ENCODE measurements at regions of chrX and their contacts with region 1.

Region 1: DNA sequence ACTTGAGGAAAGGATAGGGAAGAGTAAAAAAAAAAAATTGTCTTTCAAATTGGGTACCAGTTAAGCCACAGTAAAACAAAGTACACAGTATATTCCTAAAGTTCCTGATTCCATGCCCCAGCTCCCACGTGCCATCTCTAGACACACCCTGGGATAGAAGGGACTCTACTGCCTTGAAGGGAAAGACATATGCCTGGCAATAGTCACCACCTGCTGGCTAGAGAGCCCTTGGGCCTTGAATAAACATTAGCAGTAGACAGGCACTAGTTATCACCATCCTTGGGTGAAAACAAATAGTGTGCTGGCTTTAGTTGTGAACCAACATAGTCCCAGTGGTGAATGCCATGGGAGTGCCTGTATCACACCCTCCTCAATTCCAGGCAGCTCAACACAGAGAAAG is 44.9 kb downstream of the KLHL4 start:
- DNase-seq: no peak
- H3K4me3 ChIP-seq: no peak overlapping the region
- H3K27ac ChIP-seq: no peak overlapping the region
- H3K4me1 ChIP-seq: no peaks in the 10 kb centered on the region
- H3K27me3 ChIP-seq: no peaks in the 10 kb centered on the region
- CTCF ChIP-seq: no peak

Region 2: GRCh38 chrX:87517571-87518141 is 44.9 kb before region 1 on chrX and contains the start of gene KLHL4:
- CTCF ChIA-PET with region 1: no interaction called
- POLR2A ChIA-PET with region 1: no interaction called
- intact Hi-C with region 1: loop called (anchors 10 kb)
- DNase-seq: peak in 1 of 2 experiments; percentile 33
- H3K4me3 ChIP-seq: no peak within 1 kb of the TSS; the same call in 1 of the 2 replicates
- H3K27ac ChIP-seq: no peak within 1 kb of the TSS
- H3K4me1 ChIP-seq: peaks cover 4% of the 10 kb centered on the region; the same call in 1 of the 2 replicates
- H3K27me3 ChIP-seq: no peaks in the 10 kb centered on the region
- CTCF ChIP-seq: no peak
- total RNA-seq, gene KLHL4: 0.38 and 0.65 TPM in 2 replicates

Region 3: DNA sequence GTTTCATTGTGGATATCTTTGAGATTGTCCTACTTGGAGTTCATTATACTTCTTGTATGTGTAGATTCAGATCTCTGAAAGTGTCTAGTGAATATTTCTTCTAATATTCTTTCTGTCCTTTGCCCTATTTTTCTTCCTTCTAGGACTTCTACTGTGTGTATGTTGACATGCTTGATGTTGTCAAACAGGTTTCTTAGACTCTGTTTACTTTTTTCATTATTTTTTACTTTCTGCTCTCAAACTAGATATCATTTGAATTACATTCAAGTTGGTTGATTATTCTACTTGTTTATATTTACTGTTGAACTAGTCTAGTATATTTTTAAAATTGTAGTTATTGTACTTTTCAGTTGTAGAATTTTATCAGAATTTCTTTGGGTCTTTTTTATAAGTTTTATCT is 30.6 kb after region 1 on chrX:
- CTCF ChIA-PET with region 1: no interaction called
- POLR2A ChIA-PET with region 1: no interaction called
- intact Hi-C with region 1: no loop called
- DNase-seq: no peak
- H3K4me3 ChIP-seq: no peak overlapping the region
- H3K27ac ChIP-seq: no peak overlapping the region
- H3K4me1 ChIP-seq: no peaks in the 10 kb centered on the region
- H3K27me3 ChIP-seq: no peaks in the 10 kb centered on the region
- CTCF ChIP-seq: no peak

Measured in PC-9 (cell line).